Activated T-helper 2 cell treated with anti-CD3 and anti-CD28 coated beads, Interferon-gamma antibody, Interleukin-2, Interleukin-4, amounts not matched to agents 10 μg/mL and 5 μg/mL and 100 μg/mL, durations not matched to agents 14 hours and 24 hours and 36 hours (primary cell): ENCODE measurements at regions of chr2 and their contacts with region 1.

Region 1: DNA sequence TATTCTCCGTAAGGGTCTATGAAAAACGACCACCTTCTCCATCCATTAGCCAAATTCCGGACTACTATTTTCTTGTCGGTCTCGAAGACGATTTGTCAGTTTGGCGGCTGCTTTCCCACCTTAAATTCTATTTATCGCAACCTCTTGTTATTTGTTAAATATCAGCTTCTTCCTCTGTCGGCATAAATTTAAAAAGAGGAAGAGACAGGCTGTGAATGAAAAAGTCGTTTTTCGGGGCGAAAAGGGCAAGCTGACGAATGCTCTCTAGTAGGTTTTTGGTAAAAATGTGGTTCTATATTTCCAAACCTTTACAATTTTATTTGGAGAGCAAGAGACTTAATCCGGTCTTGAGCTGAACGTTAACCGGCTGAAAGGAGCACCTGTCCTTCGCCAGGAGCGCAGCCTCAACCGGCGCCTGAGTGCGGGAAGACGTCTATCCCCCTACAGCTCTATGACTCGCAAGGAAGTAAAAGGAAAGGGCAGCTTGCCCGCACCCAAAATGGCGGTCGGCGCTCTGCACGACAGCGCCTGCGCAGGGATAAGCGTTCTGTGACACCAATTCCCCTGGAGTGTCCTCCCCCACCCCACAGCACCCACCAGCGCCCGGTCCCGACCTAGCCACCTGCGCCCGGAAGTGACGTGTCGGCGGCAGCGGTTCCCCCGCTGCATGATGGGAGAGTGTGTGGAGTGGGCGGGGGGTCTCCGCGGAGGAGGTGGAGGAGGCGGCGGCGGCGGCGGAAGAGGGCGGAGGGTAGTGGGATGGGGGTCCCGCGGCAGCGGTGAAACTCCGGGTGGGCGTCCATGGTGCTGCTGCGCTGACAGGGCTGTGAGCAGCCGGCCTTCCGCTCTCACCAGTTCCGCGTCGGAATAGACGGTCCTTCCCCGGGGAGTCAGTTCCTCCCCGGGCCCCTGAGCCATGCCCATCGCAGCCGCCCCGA is at the start of gene AFTPH:
- DNase-seq: peak; percentile 99
- H3K4me3 Mint-ChIP-seq: peak within 1 kb of the TSS; percentile 100
- H3K27ac Mint-ChIP-seq: peak within 1 kb of the TSS; percentile 100
- H3K4me1 Mint-ChIP-seq: peaks cover 36% of the 10 kb centered on the region
- H3K27me3 Mint-ChIP-seq: peaks cover 5% of the 10 kb centered on the region
- total RNA-seq, gene AFTPH: 34.6 and 36.6 TPM in 2 replicates

Region 2: GRCh38 chr2:63588385-63589147 is 935.4 kb before region 1 on chr2 and contains the starts of genes MDH1 and WDPCP:
- intact Hi-C with region 1: loop called (anchors 10 kb)
- DNase-seq: peak; percentile 92
- H3K4me3 Mint-ChIP-seq: peak within 1 kb of the TSS; percentile 99
- H3K27ac Mint-ChIP-seq: peak within 1 kb of the TSS; percentile 91
- H3K4me1 Mint-ChIP-seq: peaks cover 32% of the 10 kb centered on the region
- H3K27me3 Mint-ChIP-seq: no peaks in the 10 kb centered on the region
- total RNA-seq, gene MDH1: 212 and 226 TPM in 2 replicates
- total RNA-seq, gene WDPCP: 5.5 and 6.1 TPM in 2 replicates

Region 3: DNA sequence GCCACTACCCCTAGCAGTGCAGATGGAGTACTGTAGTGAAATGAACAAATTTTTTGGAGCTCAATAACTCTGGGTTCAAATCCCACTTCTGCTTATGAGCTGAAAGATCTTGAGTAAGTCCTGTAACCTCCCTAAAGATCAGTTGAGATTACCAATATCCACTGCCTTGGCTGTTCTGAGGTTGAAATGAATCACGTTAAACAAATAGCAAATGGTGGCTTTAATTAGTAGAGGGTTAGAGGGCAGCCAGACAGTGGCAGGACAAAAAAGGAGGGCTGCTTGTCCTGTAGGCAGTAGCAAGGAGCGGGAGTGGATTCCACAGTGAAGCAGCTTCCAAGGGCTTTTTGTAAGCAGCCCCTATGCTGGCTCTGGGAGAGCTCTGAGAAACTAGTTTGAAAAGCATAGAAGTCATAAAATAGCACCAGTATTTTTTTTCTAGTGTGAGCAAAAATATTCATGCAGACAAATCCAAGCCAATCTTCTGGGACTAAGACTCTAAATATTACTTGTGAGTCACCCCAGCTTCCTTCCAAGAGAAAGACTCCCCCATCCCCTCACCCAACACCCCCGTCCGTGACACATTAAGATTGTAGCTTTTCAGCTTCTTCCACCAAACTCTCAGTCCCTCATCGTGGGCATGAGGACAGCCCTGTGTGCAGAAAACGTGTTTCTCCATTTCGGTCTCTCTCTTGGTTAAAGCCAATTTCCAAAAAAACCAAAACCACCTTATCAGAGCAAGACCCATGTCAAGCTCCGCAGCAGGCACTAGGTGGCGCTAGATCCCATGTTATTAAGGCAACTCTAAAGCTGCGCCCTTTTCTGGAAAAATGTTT is 193.4 kb before region 1 on chr2:
- intact Hi-C with region 1: loop called (anchors 1 kb)
- DNase-seq: peak; percentile 54
- H3K4me3 Mint-ChIP-seq: no peak overlapping the region
- H3K27ac Mint-ChIP-seq: peak overlapping the region; percentile 64
- H3K4me1 Mint-ChIP-seq: peaks cover 49% of the 10 kb centered on the region
- H3K27me3 Mint-ChIP-seq: peaks cover 7% of the 10 kb centered on the region

Region 4: DNA sequence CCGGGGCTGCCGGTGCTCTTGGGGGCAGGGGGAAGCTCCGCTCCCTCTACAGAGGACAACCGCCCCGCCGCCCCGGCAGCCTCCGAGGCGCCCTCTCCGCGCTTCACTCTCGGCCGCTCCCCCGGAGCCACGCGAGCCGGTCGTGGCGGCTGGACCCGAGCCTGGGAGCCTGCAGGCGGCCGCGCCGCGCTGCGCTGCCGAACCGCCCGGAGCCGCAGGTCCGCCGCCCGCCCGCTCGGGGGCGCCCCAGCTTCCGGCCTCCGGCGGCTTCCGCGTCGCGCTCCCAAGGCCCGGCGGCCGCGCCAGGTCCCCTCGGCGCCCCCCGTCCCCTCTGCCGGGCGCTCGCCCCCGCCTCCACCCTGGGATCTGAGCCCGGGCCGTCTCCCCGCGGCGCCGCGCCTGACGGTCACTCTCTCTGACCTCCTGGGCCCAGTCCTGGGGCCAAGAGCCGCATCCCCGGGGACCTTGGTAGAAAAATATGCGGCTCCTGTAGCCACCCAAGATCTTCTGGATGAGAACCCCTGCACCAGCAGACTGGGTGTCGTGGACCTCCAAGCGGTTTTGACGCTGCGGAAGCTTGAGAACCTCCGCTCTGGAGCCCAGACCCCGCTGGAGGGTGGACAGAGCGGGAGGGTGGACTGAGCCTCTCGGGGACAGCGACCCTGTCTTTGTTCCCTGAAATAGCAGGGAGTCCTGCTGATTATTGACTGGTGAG is 85.4 kb after region 1 on chr2:
- intact Hi-C with region 1: loop called (anchors 1 kb)
- DNase-seq: peak; percentile 69
- H3K4me3 Mint-ChIP-seq: peak overlapping the region; percentile 66
- H3K27ac Mint-ChIP-seq: peak overlapping the region; percentile 42
- H3K4me1 Mint-ChIP-seq: peaks cover 24% of the 10 kb centered on the region
- H3K27me3 Mint-ChIP-seq: peaks cover 21% of the 10 kb centered on the region

Region 5: DNA sequence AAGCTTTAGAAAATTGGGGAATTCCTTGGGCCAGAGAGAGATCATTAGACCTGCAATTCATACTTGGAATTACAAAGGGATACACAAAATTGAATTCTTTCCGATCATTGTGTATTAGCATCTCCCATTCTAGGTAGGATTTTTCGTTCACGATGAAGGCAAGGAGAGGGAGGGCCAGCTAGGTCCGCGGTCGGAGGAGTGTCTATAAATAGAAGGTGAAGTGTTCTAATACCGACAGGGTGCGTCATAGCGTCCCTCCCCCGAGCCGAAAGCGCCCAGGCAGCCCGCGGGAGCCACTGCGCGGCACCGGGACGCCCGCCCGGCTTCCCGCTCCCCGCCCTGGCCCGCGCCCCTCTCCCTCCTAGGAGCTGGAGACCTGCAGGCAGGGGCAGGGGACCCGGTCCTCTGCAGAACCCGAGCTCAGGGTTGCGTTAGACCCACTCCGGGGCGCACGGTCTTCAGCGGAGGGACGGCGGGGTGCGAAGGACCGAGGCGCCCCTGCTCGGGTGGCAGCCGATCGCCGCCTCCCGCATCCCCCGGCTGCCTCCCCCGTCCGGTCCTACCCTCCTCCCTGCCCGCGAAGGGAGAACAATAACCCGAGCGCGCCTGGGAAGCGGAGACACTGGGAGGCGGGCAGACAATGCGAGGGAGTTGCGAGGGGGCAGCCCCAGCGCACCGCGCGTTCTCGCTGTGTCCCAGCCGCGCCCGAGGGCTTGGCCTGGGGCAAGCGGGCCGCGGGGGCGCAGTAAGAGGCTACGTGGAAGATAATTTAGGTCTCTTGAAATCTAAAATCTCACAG is 243.9 kb after region 1 on chr2:
- intact Hi-C with region 1: loop called (anchors 5 kb)
- DNase-seq: peak; percentile 76
- H3K4me3 Mint-ChIP-seq: peak overlapping the region; percentile 87
- H3K27ac Mint-ChIP-seq: peak overlapping the region; percentile 96
- H3K4me1 Mint-ChIP-seq: peaks cover 50% of the 10 kb centered on the region
- H3K27me3 Mint-ChIP-seq: peaks cover 6% of the 10 kb centered on the region

Region 6: DNA sequence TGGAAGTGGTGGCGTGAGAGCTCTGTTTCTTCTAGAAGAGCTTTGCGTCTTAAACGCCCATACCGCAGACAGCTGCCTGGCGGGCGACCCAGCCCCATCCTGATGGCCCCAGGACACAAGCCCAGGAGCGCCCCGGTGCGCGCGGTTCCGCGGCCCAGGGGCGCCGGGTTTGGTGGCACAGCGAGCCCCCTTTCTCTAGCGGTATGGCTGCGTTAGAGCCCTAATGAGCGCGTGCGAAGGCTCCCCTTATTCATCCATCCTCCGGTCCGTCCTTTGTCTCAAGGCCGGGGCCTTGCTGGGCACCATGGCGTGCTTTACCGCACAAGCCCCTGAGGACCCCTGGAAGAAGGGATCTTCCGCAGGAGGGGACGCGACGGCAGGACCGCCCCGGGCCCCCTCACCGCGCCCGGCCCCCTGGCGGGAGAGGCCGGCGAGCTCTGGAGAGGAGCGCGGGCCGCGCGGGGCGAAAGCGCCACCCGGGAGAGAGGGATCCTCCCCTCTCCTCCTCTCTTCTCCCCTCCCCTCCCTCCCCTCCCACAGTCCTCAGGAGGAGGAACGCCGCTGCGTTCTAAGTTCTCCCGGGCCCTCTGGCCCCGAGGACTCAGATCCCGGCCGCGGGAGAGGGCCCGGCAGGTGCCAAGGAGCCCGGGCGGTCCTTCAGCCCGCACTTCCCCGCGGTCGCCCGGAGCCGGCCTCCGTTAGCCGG is 464.6 kb after region 1 on chr2:
- intact Hi-C with region 1: loop called (anchors 5 kb)
- DNase-seq: peak; percentile 80
- H3K4me3 Mint-ChIP-seq: peak overlapping the region; percentile 84
- H3K27ac Mint-ChIP-seq: peak overlapping the region; percentile 90
- H3K4me1 Mint-ChIP-seq: peaks cover 65% of the 10 kb centered on the region
- H3K27me3 Mint-ChIP-seq: peaks cover 3% of the 10 kb centered on the region

Region 7: DNA sequence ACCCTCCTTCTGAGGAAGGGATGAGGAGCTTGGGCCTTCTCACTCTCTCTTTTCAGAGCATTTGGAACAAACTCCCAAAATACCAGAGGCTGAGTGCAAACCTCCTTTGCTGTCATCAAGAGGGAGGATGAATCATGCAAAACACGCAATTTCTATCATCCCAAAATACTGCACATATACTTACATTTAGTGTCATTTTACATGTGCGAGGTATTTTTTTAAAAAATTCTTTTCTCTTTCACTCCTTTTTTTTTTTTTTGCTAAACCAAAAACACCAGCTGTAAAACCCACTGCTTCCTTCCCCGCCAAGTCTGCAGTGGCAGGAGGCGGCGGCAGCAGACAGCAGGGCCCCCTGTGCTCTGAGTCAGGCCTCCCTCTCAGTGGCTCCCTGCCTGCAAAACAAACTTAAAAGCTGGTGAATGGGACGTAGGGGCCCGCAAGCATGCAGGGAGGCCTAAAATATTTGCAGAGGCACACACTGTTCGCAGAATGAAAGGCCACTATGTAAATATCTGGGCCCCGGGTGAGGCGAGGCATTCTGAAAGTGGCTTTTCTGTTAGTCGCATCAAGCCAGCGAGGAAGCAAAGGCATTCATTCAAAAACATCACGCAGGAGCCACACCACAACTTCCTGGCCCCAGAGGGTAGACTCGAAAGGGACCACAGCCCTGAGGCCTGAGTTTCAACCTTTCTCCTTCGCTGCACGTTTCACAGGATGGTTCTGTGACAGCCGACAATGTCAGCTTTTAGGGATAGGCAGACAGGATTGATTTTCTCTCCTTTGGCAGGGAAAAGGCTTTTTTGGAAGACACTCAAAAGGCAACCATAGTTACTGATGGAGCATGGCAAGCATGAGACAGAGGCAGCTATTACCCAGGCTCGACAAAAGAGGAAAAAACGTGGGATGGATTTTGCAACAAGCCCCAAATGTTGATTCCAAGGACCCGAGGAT is 777.1 kb after region 1 on chr2:
- intact Hi-C with region 1: loop called (anchors 5 kb)
- DNase-seq: peak; percentile 69
- H3K4me3 Mint-ChIP-seq: peak overlapping the region; percentile 55
- H3K27ac Mint-ChIP-seq: peak overlapping the region; percentile 86
- H3K4me1 Mint-ChIP-seq: peaks cover 53% of the 10 kb centered on the region
- H3K27me3 Mint-ChIP-seq: peaks cover 13% of the 10 kb centered on the region